ENCODE measurements at regions of chr3 and their contacts with region 1.

Region 1: GRCh38 chr3:56801662-56802377 is at the start of gene ARHGEF3:
- DNase-seq: peak; percentile 81 to 98 (median 91)

Region 2: DNA sequence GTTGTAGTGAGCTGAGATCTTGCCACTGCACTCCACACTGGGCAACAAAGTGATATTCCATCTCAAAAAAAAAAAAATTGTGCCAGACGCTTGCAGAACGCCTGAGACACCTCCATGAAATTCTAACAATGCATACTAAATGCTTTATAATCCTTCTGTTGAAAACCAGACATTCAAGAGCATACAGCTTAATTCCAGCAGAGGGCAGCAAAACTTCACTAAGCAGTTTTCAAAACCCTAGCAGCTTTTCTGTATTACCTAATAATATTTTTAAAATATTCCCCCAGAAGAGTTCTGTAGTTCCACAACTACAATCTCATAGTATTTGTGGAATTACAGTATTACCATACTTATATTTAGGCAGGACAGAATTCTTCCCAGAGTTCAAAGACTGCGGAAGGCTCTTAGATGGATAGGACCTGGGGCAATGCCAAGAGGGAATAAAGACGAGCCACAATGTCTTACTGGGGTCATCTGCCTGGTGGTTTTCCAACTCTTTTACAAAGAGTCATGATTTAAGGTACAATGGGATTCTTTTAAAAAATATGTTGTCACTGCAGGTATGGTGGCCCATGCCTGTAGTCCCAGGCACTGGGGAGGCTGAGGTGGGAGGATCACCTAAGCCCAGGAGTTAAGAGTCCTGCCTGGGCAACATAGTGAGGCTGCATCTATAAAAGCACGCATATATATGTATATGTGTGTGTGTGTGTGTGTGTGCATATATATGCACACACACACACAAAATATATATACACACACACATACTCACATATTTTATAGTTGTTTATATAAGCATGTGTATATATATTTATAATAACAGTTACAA is 99.1 kb before region 1 on chr3:
- intact Hi-C with region 1: loop called (anchors 1 kb)
- DNase-seq: peak in 3 of 10 donors; percentile 21 to 50 (median 26)

Region 3: GRCh38 chr3:56837196-56837955 is 35.6 kb after region 1 on chr3:
- intact Hi-C with region 1: no loop called
- DNase-seq: no peak

Measured in posterior cingulate gyrus (tissue), 11 donors.